Motor neuron (in vitro differentiated cells): ENCODE measurements at regions of chr3 and their contacts with region 1.

Region 1: GRCh38 chr3:129490242-129491045 is 38.0 kb upstream of the RHO start:
- ATAC-seq: peak; percentile 88 to 99 (median 98)
- H3K4me3 ChIP-seq: no peak overlapping the region
- H3K27ac ChIP-seq: peak overlapping the region in 1 of 2 donors; percentile 26
- H3K4me1 ChIP-seq: peaks cover 6 to 7% of the 10 kb centered on the region in 2 donors

Region 2: GRCh38 chr3:129606636-129607390 is 116.4 kb after region 1 on chr3 and contains the start of gene PLXND1:
- in situ Hi-C with region 1: loop called in 1 of 9 experiments (anchors 25 kb)
- ATAC-seq: peak; percentile 34 to 75 (median 65)
- H3K4me3 ChIP-seq: peak within 1 kb of the TSS; percentile 18 to 46 (median 36)
- H3K27ac ChIP-seq: peak within 1 kb of the TSS in 1 of 2 donors; percentile 1
- H3K4me1 ChIP-seq: peaks cover 8 to 31% of the 10 kb centered on the region in 2 donors
- total RNA-seq, gene PLXND1: 5.0 to 77.3 (median 27.8) TPM

Region 3: GRCh38 chr3:129911261-129911861 is 420.9 kb after region 1 on chr3:
- in situ Hi-C with region 1: loop called in 1 of 9 experiments (anchors 25 kb)
- ATAC-seq: no peak
- H3K4me3 ChIP-seq: no peak overlapping the region
- H3K27ac ChIP-seq: no peak overlapping the region
- H3K4me1 ChIP-seq: no peaks in the 10 kb centered on the region